Naive thymus-derived CD8-positive, alpha-beta T cell (primary cell): ENCODE measurements at regions of chr19 and their contacts with region 1.

Region 1: DNA sequence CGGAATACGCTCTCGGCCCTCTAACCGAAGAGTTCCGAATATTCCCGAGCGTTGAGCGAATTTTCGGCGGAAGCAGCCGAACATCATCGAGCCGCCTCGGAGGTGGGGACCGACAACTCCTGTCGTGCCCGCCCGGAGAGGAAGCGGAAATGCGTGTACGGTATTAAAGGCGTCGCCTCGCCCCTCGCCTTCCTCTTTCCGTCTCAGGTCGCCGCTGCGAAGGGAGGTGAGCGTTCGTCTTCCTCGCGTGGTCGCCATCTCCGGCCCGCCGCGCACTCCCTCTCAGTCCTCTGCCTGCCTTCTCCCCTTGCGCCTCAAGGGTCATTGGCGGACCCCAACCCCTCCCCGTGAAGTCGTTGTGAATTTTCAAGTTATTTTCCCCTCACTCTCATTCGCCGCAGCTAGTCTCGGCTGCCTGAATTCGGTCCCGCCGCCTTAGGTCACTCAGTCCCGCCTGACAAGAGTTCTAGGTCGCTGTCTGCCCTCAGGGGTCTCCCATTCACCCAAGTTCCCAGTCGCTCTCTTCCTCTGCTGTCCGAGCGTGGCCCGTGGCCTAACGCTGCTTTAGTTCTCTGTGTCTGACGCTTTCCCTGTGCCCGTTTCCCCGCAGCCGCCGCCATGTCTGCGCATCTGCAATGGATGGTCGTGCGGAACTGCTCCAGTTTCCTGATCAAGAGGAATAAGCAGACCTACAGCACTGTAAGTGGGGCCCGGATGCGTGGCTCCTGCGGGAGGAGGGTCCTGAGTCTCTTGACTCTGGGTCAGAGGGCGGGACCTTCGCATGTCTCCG is at the start of gene RPL28:
- DNase-seq: peak; percentile 63 to 100 (median 99)
- ATAC-seq: peak; percentile 73 to 81
- H3K4me3 Mint-ChIP-seq: peak within 1 kb of the TSS; percentile 99 to 100 (median 100)
- H3K27ac Mint-ChIP-seq: peak within 1 kb of the TSS; percentile 98 to 100 (median 99)
- H3K4me1 Mint-ChIP-seq: peaks cover 36 to 79% (median 75%) of the 10 kb centered on the region in 4 donors
- H3K27me3 Mint-ChIP-seq: no peaks in the 10 kb centered on the region
- polyA plus RNA-seq, gene RPL28: 559 to 1,017 (median 787) TPM

Region 2: DNA sequence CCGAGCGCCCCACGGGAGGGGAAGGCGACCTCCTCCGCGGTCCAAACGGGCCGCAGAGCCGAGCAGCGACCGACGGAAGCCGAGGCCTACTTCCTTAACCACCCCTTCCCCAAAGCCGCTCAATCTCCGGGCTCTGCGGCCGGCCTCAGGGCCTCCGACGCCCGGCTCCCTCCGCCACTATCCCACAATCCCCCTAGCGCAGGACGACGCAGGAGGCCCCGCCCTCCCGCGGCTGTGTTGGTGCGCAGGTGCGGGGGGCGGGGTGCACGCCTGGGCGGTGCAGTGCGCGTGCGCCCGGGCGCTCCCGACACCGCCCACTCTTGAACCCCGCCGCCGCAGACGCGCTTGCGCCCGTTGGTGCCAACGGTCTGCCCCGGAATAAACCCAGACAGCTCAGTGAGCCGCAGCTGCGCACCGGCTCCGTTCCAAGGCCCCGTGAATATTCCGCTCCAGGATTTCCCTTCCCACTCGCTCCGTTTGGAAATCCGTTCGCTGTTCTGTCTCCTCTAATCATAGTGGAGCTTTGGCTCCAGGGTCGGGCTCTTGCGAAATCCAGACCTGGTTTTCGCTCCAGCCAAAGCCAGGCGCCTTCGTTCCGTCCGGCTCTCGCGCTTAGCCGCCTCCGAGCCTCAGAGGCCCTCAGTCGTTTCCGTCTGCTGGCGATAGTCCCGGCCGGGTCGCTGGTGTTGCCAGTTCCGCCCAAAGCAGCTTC is 127.0 kb before region 1 on chr19 and contains the start of gene PPP6R1:
- POLR2A ChIA-PET with region 1: interaction called, 33 read pairs
- DNase-seq: peak; percentile 88 to 99 (median 94)
- ATAC-seq: peak; percentile 77 to 81
- H3K4me3 Mint-ChIP-seq: peak within 1 kb of the TSS; percentile 95 to 99 (median 98)
- H3K27ac Mint-ChIP-seq: peak within 1 kb of the TSS; percentile 98 to 100 (median 99)
- H3K4me1 Mint-ChIP-seq: peaks cover 20 to 51% (median 43%) of the 10 kb centered on the region in 4 donors
- H3K27me3 Mint-ChIP-seq: no peaks in the 10 kb centered on the region
- polyA plus RNA-seq, gene PPP6R1: 57.3 to 131 (median 60.9) TPM

Region 3: DNA sequence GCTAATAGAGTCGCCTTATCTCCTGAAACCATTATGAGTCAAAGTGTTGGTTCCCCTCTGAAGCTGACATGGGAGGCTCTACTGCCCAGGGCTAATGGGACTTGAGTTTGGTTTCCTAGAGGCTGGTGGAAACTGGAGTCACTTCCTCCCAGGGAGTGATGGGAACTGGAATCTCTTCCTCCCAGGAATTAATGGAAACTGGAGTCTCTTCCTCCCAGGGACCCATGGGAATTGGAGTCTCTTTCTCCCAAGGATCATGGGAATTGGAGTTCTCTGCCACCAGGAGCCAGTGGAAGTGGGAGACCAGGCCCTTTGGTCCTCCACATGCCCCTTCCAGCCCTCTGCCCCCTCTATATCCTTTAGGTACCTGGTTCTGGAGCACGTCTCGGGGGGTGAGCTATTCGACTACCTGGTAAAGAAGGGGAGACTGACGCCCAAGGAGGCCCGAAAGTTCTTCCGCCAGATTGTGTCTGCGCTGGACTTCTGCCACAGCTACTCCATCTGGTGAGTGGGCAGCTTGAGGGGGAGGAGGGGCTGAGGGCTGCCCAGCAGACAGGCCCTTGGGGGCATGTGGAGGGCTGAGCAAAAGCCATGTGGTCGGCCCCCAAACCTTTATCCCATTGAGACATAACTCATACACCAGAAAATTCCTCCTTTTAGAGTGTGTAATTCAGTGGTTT is 96.7 kb before region 1 on chr19:
- POLR2A ChIA-PET with region 1: interaction called, 13 read pairs
- DNase-seq: no peak
- ATAC-seq: no peak
- H3K4me3 Mint-ChIP-seq: no peak overlapping the region
- H3K27ac Mint-ChIP-seq: no peak overlapping the region
- H3K4me1 Mint-ChIP-seq: peaks cover 0 to 9% (median 7%) of the 10 kb centered on the region in 4 donors
- H3K27me3 Mint-ChIP-seq: no peaks in the 10 kb centered on the region

Region 4: GRCh38 chr19:55301459-55302317 is 84.2 kb before region 1 on chr19:
- POLR2A ChIA-PET with region 1: interaction called, 21 read pairs
- DNase-seq: peak; percentile 91 to 99 (median 94)
- ATAC-seq: peak; percentile 92 to 94
- H3K4me3 Mint-ChIP-seq: peak overlapping the region; percentile 84 to 95 (median 90)
- H3K27ac Mint-ChIP-seq: peak overlapping the region; percentile 73 to 96 (median 92)
- H3K4me1 Mint-ChIP-seq: peaks cover 5 to 14% (median 11%) of the 10 kb centered on the region in 4 donors
- H3K27me3 Mint-ChIP-seq: peaks cover 0 to 3% (median 0%) of the 10 kb centered on the region in 5 donors

Region 5: GRCh38 chr19:55339048-55339888 is 46.7 kb before region 1 on chr19 and contains the start of gene KMT5C:
- POLR2A ChIA-PET with region 1: interaction called, 46 read pairs
- DNase-seq: peak; percentile 98 to 100 (median 100)
- ATAC-seq: peak; percentile 78 to 85
- H3K4me3 Mint-ChIP-seq: peak within 1 kb of the TSS; percentile 83 to 99 (median 94)
- H3K27ac Mint-ChIP-seq: peak within 1 kb of the TSS; percentile 89 to 99 (median 97)
- H3K4me1 Mint-ChIP-seq: peaks cover 12 to 34% (median 23%) of the 10 kb centered on the region in 4 donors
- H3K27me3 Mint-ChIP-seq: peaks cover 0 to 15% (median 0%) of the 10 kb centered on the region in 5 donors
- polyA plus RNA-seq, gene KMT5C: 1.7 to 2.5 (median 2.1) TPM

Region 6: GRCh38 chr19:55398200-55398925 is 12.4 kb after region 1 on chr19:
- POLR2A ChIA-PET with region 1: interaction called, 181 read pairs
- DNase-seq: no peak
- ATAC-seq: no peak
- H3K4me3 Mint-ChIP-seq: peak overlapping the region in 1 of 10 donors; percentile 12
- H3K27ac Mint-ChIP-seq: peak overlapping the region in 1 of 10 donors; percentile 5
- H3K4me1 Mint-ChIP-seq: peaks cover 0 to 10% (median 6%) of the 10 kb centered on the region in 4 donors
- H3K27me3 Mint-ChIP-seq: no peaks in the 10 kb centered on the region

Region 7: GRCh38 chr19:55407800-55408532 is 22.0 kb after region 1 on chr19:
- POLR2A ChIA-PET with region 1: interaction called, 181 read pairs
- DNase-seq: peak; percentile 94 to 99 (median 97)
- ATAC-seq: peak; percentile 91 to 92
- H3K4me3 Mint-ChIP-seq: peak overlapping the region; percentile 88 to 98 (median 94)
- H3K27ac Mint-ChIP-seq: peak overlapping the region; percentile 93 to 100 (median 99)
- H3K4me1 Mint-ChIP-seq: peaks cover 20 to 39% (median 30%) of the 10 kb centered on the region in 4 donors
- H3K27me3 Mint-ChIP-seq: peaks cover 0 to 3% (median 0%) of the 10 kb centered on the region in 5 donors

Region 8: DNA sequence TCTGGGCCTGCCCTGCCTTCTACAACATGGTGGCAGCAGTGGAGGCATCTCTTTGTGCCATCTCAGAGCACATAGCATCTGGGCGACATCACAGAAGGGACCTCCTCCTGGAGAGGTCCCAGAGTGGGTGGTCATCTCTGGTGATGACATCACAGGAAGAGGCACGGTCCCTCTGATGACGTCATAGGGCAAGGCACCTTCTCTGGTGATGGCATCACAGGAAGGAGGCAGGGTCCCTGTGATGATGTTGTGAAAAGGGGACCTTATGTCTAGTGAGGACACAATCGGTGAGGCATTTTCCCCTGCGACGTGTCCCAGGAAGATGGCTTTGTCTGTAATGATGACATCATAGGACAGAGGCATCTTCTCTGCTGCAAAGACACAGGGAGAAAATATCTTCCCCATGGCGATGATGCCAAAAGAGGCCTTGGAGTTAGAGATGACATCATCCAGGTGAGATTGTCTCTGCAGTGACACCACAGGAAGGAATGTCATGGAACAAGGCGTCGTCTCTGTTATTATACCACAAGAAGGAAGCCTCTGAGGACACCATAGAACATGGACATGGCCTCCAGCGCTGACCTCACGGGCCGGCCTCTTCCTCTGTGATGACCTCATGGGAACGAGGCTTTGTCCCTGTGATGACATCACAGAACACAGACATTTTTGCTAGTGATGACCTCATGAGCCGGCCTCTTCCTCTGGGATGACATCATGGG is 46.5 kb after region 1 on chr19:
- POLR2A ChIA-PET with region 1: no interaction called
- DNase-seq: no peak
- ATAC-seq: no peak
- H3K4me3 Mint-ChIP-seq: no peak overlapping the region
- H3K27ac Mint-ChIP-seq: no peak overlapping the region
- H3K4me1 Mint-ChIP-seq: peaks cover 0 to 16% (median 11%) of the 10 kb centered on the region in 4 donors
- H3K27me3 Mint-ChIP-seq: peaks cover 26 to 61% (median 46%) of the 10 kb centered on the region in 5 donors

Region 9: DNA sequence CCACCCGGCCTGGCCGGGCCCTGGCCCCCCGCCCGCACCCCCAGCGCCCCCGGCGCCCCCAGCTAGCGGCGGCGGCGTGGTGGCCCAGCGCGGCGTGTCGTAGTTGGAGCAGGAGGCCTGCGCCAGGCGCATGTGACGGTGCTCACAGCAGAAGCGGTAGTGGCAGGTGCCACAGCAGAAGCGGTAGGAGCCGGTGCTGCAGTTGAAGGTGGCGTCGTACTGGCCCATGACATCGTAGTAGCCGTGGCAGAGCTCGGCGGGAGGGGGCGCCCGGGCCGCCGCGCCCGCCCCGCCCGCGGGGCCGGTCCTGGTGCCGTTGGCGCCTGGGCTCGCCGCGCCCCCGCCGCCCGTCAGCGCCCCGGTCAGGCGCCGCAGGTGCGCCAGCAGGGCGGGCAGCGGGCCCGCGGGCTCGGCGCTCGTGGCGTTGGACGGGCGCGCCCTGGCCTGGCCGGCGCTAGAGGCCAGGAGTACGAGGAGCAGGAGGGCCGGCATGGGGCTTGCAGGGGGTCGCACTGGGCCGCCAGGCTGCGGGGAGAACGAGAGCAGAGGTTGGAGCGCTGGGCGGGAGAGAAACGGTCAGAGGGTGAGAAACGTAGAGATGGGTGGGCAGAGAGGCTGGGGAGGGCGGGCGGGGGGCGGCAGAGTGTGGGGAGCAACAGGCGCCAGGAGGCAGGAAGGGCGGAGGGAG is 56.6 kb after region 1 on chr19:
- POLR2A ChIA-PET with region 1: no interaction called
- DNase-seq: no peak
- ATAC-seq: peak; percentile 61 to 67
- H3K4me3 Mint-ChIP-seq: peak overlapping the region in 4 of 10 donors; percentile 19 to 59 (median 31)
- H3K27ac Mint-ChIP-seq: no peak overlapping the region
- H3K4me1 Mint-ChIP-seq: peaks cover 17 to 28% (median 23%) of the 10 kb centered on the region in 4 donors
- H3K27me3 Mint-ChIP-seq: peaks cover 41 to 75% (median 54%) of the 10 kb centered on the region in 5 donors